ENCODE measurements at regions of chr7 and their contacts with region 1.

Region 1: DNA sequence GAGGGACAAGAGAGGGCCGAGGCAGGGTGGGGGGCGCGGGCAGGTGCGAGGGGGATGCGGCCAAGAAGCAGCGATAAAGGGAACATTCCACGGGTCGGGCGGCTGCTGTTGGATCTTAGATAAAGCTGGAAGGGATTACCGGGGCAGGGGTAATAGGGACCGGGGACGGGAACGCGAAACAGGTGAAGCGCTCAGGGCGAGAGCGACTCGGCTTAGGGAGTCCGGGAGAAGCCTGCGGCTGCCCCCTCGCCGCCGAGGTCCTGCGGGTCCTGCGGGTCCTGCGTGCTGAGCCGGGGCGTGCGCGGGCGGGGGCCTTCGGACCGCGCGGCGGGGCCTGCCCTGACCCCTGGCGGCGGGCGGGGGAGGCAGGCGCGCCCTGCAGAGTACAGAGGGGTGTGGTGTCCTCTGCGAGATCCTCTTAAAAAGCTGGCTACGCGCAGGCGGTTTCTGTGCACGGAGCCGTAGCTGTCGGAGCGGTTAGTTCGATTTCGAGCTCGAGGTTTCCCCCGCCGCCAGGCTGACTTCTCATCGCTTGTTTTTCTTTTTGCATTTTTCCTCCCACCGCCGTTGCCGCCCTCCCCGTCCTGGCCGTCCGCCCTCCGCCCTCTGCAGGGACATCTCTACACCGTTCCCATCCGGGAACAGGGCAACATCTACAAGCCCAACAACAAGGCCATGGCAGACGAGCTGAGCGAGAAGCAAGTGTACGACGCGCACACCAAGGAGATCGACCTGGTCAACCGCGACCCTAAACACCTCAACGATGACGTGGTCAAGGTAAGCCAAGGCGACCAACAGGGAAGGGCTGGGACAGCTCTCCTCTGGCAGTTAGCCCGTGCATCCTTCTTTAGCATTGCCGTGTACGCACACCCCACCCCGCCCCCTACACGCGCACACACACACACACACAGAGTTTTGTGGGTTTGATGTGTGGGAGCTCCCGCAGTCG is 1.4 kb downstream of the CAV1 start:
- DNase-seq: peak; percentile 62
- H3K4me3 ChIP-seq: peak overlapping the region; percentile 49 to 51
- H3K27ac ChIP-seq: peak overlapping the region; percentile 81 to 83
- H3K4me1 ChIP-seq: no peaks in the 10 kb centered on the region
- H3K27me3 ChIP-seq: no peaks in the 10 kb centered on the region
- CTCF ChIP-seq: peak; percentile 70 to 91 (median 82)
- POLR2A ChIP-seq: peak; percentile 25

Region 2: DNA sequence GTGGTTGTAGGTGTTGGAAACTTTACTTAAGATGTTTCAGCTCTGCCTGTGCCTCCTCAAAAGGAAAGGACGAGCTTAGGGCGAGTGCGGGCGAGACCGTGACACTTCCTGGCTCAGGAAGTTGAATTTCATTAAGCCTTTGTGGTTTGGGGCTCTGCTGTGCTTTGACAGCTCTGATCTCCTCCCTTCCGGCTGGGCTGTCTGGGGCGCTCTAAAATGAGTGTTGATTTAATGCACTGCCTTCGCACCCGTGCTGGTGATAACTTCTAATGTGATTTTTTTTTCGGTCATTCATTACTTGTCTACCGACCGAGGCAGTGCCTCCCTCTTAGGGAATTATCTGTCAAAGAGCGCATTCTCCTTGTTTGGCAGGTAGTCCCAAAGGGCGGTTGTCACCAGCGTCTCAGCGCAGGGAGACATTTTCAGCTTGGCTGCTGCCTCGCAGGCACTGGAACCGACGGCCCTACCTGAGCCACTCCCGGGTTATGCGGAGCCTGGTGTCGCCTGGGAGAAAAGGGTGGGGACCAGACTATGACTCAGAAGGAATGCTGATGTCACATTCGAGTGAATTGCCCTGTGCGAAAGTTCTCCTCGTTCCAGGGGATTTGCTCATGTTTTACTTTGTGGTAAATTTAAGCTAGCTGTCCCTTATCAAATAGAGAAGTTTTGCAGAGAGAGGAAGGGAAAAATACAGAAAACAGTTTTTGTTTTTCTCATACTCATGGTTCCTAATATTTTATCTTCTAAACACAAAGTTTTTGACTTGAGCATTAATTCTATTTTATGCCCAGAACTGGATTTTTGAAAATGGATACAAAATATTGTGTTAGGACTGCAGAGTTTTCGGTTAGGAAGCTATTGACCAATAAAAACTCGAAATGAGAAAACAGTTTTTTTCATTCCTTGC is 314.9 kb before region 1 on chr7:
- intact Hi-C with region 1: no loop called
- DNase-seq: peak; percentile 86
- H3K4me3 ChIP-seq: peak overlapping the region; percentile 66 to 75
- H3K27ac ChIP-seq: peak overlapping the region; percentile 88 to 91
- H3K4me1 ChIP-seq: no peaks in the 10 kb centered on the region
- H3K27me3 ChIP-seq: no peaks in the 10 kb centered on the region
- CTCF ChIP-seq: no peak
- POLR2A ChIP-seq: peak; percentile 96

Region 3: GRCh38 chr7:116258734-116259133 is 267.5 kb before region 1 on chr7:
- intact Hi-C with region 1: loop called (anchors 2 kb)
- DNase-seq: peak; percentile 23
- H3K4me3 ChIP-seq: no peak overlapping the region
- H3K27ac ChIP-seq: no peak overlapping the region
- H3K4me1 ChIP-seq: no peaks in the 10 kb centered on the region
- H3K27me3 ChIP-seq: no peaks in the 10 kb centered on the region
- CTCF ChIP-seq: peak; percentile 31 to 90 (median 84)
- POLR2A ChIP-seq: no peak

Region 4: GRCh38 chr7:116271963-116272839 is 254.0 kb before region 1 on chr7:
- intact Hi-C with region 1: loop called (anchors 5 kb)
- DNase-seq: peak; percentile 64
- H3K4me3 ChIP-seq: no peak overlapping the region
- H3K27ac ChIP-seq: peak overlapping the region; percentile 28 to 34
- H3K4me1 ChIP-seq: peaks cover 4% of the 10 kb centered on the region
- H3K27me3 ChIP-seq: no peaks in the 10 kb centered on the region
- CTCF ChIP-seq: no peak
- POLR2A ChIP-seq: no peak

Region 5: GRCh38 chr7:116354546-116355408 is 171.4 kb before region 1 on chr7:
- intact Hi-C with region 1: loop called (anchors 10 kb)
- DNase-seq: peak; percentile 49
- H3K4me3 ChIP-seq: no peak overlapping the region
- H3K27ac ChIP-seq: peak overlapping the region; percentile 31 to 59
- H3K4me1 ChIP-seq: no peaks in the 10 kb centered on the region
- H3K27me3 ChIP-seq: no peaks in the 10 kb centered on the region
- CTCF ChIP-seq: no peak
- POLR2A ChIP-seq: no peak

Region 6: GRCh38 chr7:116443101-116443523 is 83.1 kb before region 1 on chr7:
- intact Hi-C with region 1: loop called (anchors 10 kb)
- DNase-seq: no peak
- H3K4me3 ChIP-seq: no peak overlapping the region
- H3K27ac ChIP-seq: no peak overlapping the region
- H3K4me1 ChIP-seq: no peaks in the 10 kb centered on the region
- H3K27me3 ChIP-seq: no peaks in the 10 kb centered on the region
- CTCF ChIP-seq: no peak
- POLR2A ChIP-seq: no peak